AG04449 (cell line): ENCODE measurements at regions of chr10 and their contacts with region 1.

Region 1: DNA sequence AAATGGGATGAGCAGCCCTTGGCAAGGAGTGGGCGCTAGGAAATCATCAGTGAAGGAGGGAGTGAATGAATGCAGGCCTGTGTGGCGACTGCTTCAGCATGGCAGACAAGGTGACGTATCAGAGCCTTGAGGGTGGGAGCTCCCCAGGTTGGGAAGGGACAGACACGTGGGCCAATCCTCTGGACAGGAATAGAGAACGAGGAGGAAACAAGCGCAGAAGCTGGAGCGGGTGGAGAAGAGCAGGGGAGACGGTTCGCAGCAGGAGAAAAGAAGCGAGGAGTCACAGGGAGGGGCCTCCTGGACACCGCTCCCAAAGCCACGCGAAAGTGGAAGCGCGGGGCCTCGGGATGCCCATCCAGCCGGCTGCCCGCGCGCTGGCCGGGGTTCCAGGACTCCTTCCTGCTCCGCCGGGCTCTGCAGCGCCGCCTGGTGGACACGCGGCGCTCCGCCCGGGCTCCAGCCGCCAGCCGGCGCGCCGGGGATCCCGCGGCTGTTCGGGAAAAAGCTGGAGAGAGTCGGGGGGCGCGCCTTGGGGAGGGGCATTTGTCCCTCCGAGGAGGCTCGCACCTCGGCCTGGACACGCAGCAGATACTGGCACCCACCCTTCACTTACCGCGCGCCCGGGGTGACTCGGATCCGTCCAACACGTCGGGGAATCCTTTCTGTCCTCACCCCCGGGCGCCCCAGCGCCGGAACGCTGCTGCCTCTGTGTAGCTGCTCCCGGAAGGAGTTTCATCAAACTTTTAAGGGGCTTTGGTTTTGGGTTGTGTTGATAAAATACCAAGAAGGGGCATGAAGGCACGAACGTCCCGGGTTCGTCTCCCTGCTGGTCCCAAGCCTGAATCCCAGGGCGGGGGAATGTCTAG is 6.3 kb downstream of the ZNF503 start:
- DNase-seq: no peak
- H3K4me3 ChIP-seq: peak overlapping the region; percentile 25
- CTCF ChIP-seq: peak; percentile 68

Region 2: DNA sequence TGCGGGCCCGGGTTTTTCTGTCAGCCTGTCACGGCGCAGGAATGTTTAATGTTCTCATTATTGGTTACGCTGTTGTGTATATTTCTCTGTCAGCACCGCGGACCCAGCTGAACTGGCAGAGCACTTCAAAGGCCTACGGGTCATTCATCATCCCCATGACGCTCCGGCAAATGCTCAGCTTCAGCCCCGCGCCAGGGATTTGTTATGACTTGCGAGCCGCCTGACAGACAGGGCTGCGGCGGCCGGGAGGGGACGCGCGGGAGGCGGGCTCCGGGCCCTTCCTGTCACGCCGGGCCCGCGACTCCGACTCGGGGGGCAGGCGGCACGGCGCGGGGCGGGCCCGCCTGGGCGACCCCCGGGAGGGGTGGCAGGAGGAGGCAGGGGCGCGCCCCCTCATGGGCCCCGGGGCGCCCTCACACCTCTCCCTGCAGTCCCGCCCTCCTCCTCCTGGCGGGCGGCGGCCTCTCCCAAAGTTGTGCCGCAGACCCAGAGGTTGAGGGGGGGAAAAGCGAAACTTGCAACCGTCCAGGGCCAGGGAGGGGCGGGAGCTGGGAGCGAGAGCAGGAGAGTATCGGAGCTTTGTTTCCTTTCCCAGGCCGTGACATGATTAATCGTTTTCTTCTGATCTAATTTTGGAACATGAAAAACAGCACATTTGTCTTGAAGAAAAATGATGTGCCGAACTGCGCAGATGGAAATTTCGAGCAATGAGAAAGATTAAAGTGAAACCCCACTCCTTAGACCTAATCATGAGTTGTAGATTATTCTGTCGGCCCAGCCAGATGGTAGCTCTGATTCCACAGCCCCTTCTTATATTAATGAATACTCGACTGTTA is 100.2 kb before region 1 on chr10:
- CTCF ChIA-PET with region 1: interaction called, 33 read pairs
- POLR2A ChIA-PET with region 1: interaction called, 3 read pairs
- DNase-seq: peak; percentile 26
- H3K4me3 ChIP-seq: peak overlapping the region; percentile 57
- CTCF ChIP-seq: peak; percentile 10

Region 3: DNA sequence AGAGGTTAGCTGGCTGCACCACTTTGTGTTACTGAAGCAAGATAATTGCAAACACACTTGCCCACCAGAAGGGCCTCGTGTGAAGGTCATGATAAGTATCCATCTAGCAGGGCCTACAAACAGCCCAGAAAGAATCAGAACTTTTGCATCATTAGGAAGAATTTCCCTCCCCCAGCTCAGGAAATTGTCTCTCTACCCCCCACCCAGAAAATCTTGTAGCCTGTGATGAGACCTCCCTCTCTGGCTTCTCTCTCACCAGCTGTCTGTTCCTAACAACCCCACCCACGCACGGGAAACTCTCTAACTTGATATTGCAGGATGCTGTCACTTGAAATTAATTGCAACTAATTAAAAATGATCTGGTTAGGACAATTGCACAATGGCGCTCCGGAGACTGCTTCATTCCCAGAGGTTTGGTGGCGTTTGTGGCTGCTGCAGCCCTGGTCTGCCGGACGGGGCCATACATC is 28.2 kb before region 1 on chr10:
- CTCF ChIA-PET with region 1: interaction called, 29 read pairs
- POLR2A ChIA-PET with region 1: no interaction called
- DNase-seq: no peak
- H3K4me3 ChIP-seq: no peak overlapping the region
- CTCF ChIP-seq: no peak

Region 4: DNA sequence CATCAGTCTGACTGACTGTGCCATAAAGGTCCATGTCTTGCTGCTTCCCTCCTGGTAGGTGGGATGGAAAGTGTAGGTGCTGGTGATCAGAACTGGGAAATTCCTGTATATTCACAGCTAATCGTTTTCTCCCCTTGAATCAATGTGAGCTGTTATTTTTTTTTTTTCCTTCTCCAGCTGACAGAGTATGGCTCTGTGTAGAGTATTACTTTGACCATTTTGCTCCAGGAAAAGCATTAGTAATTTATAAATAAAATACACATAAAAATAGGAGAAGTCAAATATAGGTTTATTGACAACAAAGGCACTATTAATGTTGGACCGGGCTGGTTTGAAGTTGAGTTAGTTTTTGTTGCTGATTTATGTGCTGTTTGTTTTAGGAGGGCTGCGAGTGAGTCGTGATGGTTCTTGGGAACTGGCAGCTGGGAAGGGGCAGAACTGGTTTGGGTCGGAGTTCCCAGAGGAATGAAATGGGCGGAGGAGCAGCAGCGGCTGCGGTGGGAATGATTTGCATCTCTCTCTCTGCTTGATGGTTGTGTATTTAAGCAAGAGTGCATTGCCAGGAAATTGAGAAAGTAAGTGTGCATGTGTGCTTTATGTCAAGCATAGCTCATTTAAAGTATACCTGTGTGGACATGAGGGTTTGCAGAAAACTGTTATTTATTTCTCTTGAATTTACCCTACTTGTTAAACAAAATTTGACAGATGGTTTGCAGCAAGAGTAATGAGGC is 117.1 kb after region 1 on chr10:
- CTCF ChIA-PET with region 1: no interaction called
- POLR2A ChIA-PET with region 1: no interaction called
- DNase-seq: no peak
- H3K4me3 ChIP-seq: no peak overlapping the region
- CTCF ChIP-seq: no peak

Region 5: GRCh38 chr10:76036111-76036940 is 641.0 kb after region 1 on chr10:
- CTCF ChIA-PET with region 1: interaction called, 32 read pairs
- POLR2A ChIA-PET with region 1: no interaction called
- DNase-seq: no peak
- H3K4me3 ChIP-seq: no peak overlapping the region
- CTCF ChIP-seq: peak; percentile 93

Region 6: DNA sequence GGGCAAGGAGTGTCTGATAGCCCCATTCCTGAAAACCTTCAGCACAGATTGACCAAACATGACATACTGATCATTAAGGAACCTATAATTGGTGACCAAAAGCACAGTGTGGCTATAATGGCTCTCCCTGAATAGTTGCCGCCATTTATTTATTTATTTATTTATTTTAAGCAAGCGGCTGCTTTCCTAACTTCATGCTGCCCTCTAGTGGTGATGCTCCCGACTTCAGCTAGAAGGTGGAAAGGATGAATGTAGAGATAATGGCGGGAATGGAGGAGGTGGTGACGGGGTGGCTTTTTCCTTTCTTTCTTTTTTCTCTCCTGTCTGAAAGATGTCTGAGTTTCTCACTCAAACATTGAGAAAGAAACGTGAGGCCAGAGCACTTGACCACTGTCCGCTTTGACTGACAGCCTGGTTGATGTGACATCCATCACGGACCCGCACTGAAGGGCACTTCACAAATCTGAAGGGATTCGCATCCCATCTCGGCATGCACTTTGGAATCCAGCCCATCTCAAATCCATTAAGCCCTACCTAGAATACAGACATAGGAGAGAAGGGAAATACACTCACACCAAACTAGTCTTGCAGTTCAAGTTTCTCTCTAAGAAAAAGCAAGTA is 1152.2 kb after region 1 on chr10:
- CTCF ChIA-PET with region 1: interaction called, 15 read pairs
- POLR2A ChIA-PET with region 1: interaction called, 5 read pairs
- DNase-seq: no peak
- H3K4me3 ChIP-seq: no peak overlapping the region
- CTCF ChIP-seq: peak; percentile 67